ENCODE measurements at regions of chr6 and their contacts with region 1.

Region 1: DNA sequence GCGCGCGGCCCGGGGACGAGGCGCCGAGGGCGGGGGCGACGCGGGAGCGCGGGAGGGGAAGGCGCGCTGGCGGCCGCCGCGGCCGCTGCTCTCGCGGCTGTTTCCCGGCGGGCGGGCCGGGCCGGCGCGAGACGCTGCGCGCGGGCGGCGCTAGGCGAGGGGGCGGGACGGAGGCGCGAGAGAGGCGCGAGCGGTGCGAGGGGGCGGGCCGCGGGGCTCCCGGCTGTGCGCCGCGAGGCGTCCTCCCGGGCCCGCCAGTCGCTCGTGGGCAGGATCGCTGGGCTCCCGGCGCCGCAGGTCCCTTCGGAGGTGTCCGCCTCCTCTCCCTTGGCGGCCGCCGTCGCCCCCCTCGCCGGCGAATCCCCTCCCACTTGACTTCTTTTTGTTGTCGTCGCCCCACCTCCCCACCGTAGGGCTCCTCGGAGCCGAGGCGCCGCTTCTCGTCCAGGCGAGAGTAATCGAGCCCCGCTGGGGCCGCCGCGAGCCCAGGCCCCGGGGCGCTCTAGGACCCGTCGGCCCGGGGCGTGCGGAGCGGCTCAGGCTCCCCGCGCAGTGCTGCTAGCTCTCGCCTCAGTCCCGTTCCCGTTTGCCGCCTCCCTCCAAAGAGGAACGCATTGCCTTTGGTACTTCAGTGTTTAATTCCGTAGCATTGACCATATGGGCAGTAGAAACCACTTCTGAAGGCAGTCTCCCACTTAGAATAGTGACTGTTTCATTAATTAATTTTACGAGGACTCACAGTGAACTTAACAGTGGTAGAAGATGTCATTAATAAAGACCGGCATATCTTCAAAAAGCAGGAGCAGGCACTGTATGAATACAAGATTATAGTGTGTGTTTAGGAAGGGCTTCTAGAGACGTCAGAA is at the start of gene RANBP9:
- DNase-seq: peak; percentile 94
- H3K4me3 ChIP-seq: peak within 1 kb of the TSS; percentile 70 to 91 (median 90)
- H3K27ac ChIP-seq: peak within 1 kb of the TSS; percentile 89 to 97 (median 96)
- H3K4me1 ChIP-seq: peaks cover 17 to 36% (median 33%) of the 10 kb centered on the region in 4 donors
- H3K27me3 ChIP-seq: no peaks in the 10 kb centered on the region
- CTCF ChIP-seq: no peak
- EP300 ChIP-seq: no peak
- POLR2A ChIP-seq: peak; percentile 57
- total RNA-seq, gene RANBP9: 29.3 to 57.1 (median 42.4) TPM

Region 2: DNA sequence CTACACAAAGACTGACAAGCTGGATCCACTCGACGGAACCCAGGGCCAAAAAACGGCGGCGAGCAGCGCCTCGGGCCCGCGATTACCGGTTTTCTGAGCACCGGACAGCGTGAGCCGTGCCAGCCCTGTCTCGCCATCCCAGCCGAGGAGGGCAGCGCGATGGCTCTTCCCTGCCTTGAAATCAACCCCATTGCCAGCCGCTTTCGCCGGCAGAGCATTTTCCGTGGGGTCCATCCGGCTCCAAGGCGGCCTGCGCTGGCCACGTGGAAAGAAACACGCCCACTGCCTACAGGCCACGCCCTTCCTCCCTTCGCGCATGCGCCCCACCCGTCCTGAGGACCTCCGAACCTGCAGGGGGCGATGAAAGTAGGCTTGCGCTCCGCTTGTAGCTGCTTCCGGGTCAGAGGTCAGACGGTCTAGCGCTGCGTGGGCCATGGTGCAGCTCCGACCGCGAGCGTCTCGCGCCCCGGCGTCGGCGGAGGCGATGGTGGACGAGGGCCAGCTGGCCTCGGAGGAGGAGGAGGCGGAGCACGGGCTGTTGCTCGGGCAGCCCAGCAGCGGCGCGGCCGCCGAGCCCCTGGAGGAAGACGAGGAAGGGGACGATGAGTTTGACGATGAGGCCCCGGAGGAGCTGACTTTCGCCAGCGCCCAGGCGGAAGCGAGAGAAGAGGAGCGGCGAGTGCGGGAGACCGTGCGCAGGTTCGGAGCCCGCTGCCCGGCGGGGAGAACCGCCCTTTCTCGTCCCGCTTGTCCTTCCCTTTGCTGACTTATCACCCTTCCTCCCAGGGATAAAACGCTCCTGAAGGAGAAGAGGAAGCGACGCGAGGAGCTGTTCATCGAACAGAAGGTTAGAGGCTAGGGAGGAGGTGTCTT is 96.8 kb before region 1 on chr6 and contains the start of gene NOL7:
- intact Hi-C with region 1: loop called (anchors 2 kb)
- DNase-seq: peak; percentile 99
- H3K4me3 ChIP-seq: peak within 1 kb of the TSS; percentile 73 to 94 (median 85)
- H3K27ac ChIP-seq: peak within 1 kb of the TSS; percentile 84 to 93 (median 90)
- H3K4me1 ChIP-seq: peaks cover 17 to 27% (median 25%) of the 10 kb centered on the region in 4 donors
- H3K27me3 ChIP-seq: no peaks in the 10 kb centered on the region
- CTCF ChIP-seq: peak; percentile 91 to 92 (median 92)
- EP300 ChIP-seq: no peak
- POLR2A ChIP-seq: peak; percentile 37
- total RNA-seq, gene NOL7: 67.3 to 97.2 (median 74.8) TPM

Region 3: GRCh38 chr6:13733178-13733887 is 21.4 kb after region 1 on chr6:
- intact Hi-C with region 1: loop called (anchors 1 kb)
- DNase-seq: peak; percentile 95
- H3K4me3 ChIP-seq: peak overlapping the region; percentile 24 to 39 (median 28)
- H3K27ac ChIP-seq: peak overlapping the region; percentile 37 to 75 (median 52)
- H3K4me1 ChIP-seq: peaks cover 0 to 26% (median 19%) of the 10 kb centered on the region in 4 donors
- H3K27me3 ChIP-seq: no peaks in the 10 kb centered on the region
- CTCF ChIP-seq: no peak
- EP300 ChIP-seq: no peak
- POLR2A ChIP-seq: no peak

Region 4: GRCh38 chr6:13760307-13761304 is 48.6 kb after region 1 on chr6:
- intact Hi-C with region 1: loop called (anchors 2 kb)
- DNase-seq: no peak
- H3K4me3 ChIP-seq: no peak overlapping the region
- H3K27ac ChIP-seq: peak overlapping the region; percentile 56 to 76 (median 70)
- H3K4me1 ChIP-seq: peaks cover 13 to 39% (median 35%) of the 10 kb centered on the region in 4 donors
- H3K27me3 ChIP-seq: no peaks in the 10 kb centered on the region
- CTCF ChIP-seq: no peak
- EP300 ChIP-seq: no peak
- POLR2A ChIP-seq: no peak

Region 5: DNA sequence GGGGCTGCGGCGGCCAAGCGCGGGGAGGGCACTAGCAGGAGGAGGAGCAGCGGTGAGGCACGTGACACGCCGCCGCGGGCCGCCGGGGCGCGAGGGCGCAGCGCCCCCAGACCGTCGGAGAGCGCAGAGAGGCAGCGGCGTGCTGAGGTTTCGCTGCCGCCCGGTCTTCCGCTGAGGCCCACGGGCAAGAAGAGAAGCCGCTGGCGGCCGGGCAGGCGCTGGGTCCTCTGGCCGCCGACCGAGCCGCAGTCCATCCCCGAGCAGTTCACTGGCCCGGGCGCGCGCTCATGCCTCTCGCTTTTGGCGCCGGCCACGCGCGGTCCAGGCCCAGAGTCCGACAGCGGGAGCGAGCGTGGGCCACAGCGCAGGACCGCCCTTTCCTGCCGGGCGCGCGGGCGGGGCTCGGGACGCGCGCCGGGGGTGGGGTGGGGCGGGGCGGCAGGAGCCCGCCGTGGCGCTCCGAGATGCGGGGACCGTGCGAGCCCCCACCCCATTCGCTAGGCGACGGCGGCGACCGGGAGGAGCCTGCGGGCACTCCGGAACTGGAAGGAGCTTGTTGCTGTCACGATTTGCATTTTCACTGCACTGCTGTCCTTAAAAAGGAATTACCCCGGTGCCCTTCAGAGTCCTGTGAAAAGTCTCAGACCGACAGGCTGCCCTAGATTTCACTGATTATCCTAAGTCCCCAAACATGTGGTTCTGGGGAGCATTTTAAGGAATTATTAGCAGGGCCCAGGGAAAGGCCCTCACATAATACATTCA is 102.4 kb after region 1 on chr6 and contains the start of gene MCUR1:
- intact Hi-C with region 1: loop called (anchors 5 kb)
- DNase-seq: peak; percentile 93
- H3K4me3 ChIP-seq: peak within 1 kb of the TSS; percentile 79 to 96 (median 86)
- H3K27ac ChIP-seq: peak within 1 kb of the TSS; percentile 90 to 97 (median 95)
- H3K4me1 ChIP-seq: peaks cover 35 to 42% (median 39%) of the 10 kb centered on the region in 4 donors
- H3K27me3 ChIP-seq: no peaks in the 10 kb centered on the region
- CTCF ChIP-seq: peak; percentile 4 to 33 (median 27)
- EP300 ChIP-seq: no peak
- POLR2A ChIP-seq: peak; percentile 37
- total RNA-seq, gene MCUR1: 7.8 to 19.1 (median 17.9) TPM

Region 6: DNA sequence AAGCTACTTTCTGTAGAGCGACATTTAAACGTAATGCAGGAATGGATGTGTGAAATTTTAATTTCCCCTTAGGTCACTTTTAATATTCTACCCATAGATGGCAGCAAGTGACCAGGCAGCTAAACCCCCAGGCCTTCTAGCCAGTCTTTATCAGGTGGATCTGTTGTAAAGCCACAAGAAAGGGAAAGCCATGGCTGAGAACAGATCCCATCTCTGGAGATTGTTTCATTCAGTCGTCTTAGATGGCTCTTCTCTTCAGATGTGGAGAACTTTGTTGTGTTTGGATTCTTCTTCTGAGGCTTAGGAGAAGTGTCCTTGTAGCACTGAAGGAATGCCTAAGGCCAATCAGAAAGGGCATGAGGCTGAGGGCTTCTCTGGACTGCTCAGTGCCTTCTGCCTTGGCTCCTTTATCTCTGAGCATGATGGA is 197.0 kb after region 1 on chr6:
- intact Hi-C with region 1: no loop called
- DNase-seq: no peak
- H3K4me3 ChIP-seq: no peak overlapping the region
- H3K27ac ChIP-seq: no peak overlapping the region
- H3K4me1 ChIP-seq: no peaks in the 10 kb centered on the region
- H3K27me3 ChIP-seq: peaks cover 0 to 15% (median 0%) of the 10 kb centered on the region in 4 donors
- CTCF ChIP-seq: peak; percentile 74 to 80 (median 79)
- EP300 ChIP-seq: no peak
- POLR2A ChIP-seq: no peak

Region 7: GRCh38 chr6:13992417-13993055 is 280.6 kb after region 1 on chr6:
- intact Hi-C with region 1: no loop called
- DNase-seq: no peak
- H3K4me3 ChIP-seq: no peak overlapping the region
- H3K27ac ChIP-seq: no peak overlapping the region
- H3K4me1 ChIP-seq: no peaks in the 10 kb centered on the region
- H3K27me3 ChIP-seq: peaks cover 0 to 22% (median 2%) of the 10 kb centered on the region in 4 donors
- CTCF ChIP-seq: no peak
- EP300 ChIP-seq: no peak
- POLR2A ChIP-seq: no peak

Region 8: GRCh38 chr6:14423330-14423729 is 711.4 kb after region 1 on chr6:
- intact Hi-C with region 1: no loop called
- DNase-seq: no peak
- H3K4me3 ChIP-seq: no peak overlapping the region
- H3K27ac ChIP-seq: no peak overlapping the region
- H3K4me1 ChIP-seq: no peaks in the 10 kb centered on the region
- H3K27me3 ChIP-seq: no peaks in the 10 kb centered on the region
- CTCF ChIP-seq: no peak
- EP300 ChIP-seq: no peak
- POLR2A ChIP-seq: no peak

Measured in esophagus muscularis mucosa (tissue), 4 donors.